Left cardiac atrium (tissue), 4 donors: ENCODE measurements at regions of chr10 and their contacts with region 1.

Region 1: DNA sequence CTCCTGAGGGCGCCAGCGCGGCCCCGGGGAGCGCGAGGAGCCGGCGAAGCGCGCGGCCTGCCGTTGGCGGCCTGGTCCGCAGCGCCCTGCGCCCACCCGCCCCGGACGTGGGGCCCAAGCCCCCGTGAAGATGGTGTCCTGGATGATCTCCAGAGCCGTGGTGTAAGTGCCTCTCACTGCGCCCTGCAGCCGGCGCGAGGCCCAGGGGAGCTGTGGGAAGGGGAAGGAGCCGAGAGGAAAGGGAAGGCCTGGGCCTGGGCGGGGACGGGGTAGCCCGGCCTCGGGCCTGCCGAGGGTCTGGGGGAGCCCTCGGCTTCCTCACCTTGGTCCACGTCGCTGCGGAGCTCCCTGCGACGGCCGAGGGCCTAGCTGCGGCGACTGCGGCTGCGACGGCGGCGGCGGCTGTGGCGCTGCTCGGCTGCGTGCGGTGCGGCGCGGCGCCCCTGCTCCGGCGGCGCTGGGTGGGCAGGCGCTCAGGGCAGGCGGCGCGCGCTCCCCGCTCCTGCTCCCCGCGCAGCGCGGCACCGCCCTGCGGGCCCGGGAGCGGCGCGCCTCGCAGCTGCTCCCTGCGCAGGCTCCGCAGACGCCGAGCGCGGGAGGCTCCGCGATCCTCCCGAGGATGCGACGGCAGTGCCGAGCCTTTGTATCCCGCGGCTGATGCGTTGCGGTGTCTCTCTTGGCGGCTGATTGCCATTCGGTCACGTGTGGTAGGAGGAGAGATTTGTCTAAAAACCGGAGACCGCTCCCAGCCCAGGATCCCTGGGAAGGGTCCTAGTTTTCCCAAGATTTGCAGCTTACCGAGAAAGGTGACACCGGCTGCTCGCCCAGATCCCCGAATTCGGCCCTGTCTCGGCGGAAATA is 445 bp downstream of the REEP3 start:
- DNase-seq: peak; percentile 73
- ATAC-seq: peak; percentile 90 to 93

Region 2: DNA sequence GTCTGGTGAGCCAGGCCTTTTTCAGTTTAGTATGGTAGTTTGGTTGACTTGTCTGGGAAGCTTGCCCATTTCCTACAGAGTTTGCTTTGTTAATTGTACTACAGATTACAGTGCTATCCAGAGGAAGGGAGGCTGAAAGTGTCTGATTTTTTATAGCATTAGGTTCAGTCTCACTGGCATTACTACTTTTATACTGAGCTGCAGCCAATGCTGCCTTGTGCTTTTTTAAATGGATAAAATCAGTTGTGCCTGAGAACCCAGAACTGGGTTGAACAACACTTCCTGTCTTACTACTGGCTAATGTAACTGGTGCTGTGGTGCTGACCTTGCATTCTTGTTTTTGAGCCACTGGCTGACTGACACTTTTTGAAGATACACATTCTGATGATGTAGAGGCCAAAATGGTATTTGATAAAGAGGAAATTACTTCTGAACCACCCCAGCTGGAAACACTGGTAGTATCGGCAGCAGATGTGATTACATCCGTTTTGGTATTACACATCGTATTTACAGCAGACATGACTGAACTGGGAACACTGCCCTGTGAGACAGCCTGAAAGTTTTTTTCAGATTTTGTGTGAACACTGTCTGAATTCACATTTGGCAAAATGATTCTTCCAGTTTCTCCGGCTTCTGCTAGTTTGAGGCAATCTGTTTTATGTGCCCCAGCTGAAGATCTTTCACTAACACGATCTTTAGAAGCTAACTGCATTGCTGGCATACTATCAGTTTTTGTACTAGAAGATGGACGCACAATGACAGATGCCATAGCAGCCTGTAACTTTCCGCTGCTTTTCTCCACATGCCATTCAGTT is 314.4 kb before region 1 on chr10:
- intact Hi-C with region 1: loop called in 1 of 2 experiments (anchors 10 kb)
- DNase-seq: peak; percentile 34
- ATAC-seq: peak; percentile 75 to 91

Region 3: GRCh38 chr10:63268798-63269503 is 252.7 kb before region 1 on chr10:
- intact Hi-C with region 1: loop called in 1 of 2 experiments (anchors 5 kb)
- DNase-seq: peak; percentile 83
- ATAC-seq: peak; percentile 96 to 98